Heart right ventricle (tissue), 16 donors: ENCODE measurements at regions of chr15 and their contacts with region 1.

Region 1: DNA sequence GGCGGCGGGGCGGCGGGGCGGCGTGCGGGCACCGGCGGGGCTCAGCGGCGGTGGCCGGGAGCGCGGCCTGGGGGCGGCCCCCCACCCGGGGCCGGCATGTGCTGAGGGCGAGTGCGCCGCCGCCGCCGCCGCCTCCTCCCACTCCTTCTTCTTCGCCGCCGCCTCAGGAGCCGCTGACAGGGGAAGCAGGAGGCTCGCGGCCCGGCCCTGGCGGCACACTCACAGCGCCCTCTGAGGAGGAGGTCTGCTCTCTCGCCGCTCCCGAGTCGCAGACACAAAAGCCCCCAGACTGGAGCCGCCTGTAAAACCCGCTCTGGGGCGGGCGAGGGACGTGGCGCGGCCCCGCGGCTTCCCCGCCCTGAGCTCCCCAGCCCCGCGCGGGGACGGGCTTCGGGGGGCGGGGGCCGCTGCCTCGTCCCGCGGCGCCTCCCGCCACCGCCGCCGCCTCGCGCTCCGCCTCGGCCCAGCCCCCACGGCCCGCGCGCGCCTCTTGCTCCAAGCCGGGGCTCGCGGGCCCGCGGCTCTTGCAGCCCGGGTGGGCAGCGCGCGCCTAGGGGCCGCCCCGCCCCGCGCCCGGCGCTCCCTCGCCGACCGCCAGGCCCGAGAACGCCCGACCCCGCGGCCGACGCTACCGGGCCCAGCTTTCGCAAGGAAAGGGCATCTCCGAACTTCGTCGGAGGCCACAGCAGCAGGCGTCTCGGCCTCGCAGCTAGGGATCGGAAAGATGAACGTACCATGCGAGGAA is at the start of gene PYGO1:
- DNase-seq: peak; percentile 38 to 57
- ATAC-seq: peak; percentile 67 to 92 (median 82)
- H3K4me3 ChIP-seq: peak within 1 kb of the TSS; percentile 43 to 70 (median 65)
- H3K27ac ChIP-seq: peak within 1 kb of the TSS in 8 of 10 donors; percentile 49 to 76 (median 68)
- H3K4me1 ChIP-seq: peaks cover 0 to 11% (median 3%) of the 10 kb centered on the region in 9 donors
- H3K27me3 ChIP-seq: peaks cover 0 to 78% (median 38%) of the 10 kb centered on the region in 7 donors
- CTCF ChIP-seq: no peak
- total RNA-seq, gene PYGO1: 2.7 to 9.5 (median 4.3) TPM

Region 2: DNA sequence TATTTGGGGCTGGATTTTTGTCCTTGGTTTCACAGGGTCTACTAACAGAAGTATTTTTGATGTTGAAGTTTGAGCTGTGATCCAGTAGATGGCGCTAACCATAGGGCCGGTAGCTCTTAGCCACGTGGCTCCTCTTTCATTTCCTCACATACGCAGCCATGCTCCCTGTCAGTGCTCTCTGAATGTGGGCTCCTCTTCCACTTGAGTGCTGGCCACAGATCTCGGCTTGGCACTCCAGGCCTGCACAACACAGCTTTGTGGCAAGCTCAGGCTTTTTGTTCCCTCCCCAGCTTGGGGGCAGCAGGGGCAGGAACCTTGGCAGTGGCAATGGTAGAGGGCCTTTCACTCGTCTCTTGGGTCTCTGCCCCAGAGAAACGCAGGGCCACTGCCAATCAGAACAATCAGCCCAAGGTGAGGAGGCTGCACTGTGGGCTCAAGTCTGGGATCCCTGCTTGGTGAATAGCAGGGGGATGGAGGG is 61.6 kb before region 1 on chr15:
- intact Hi-C with region 1: loop called in 1 of 10 experiments (anchors 5 kb)
- DNase-seq: no peak
- ATAC-seq: peak in 4 of 8 donors; percentile 17 to 66 (median 26)
- H3K4me3 ChIP-seq: no peak overlapping the region
- H3K27ac ChIP-seq: no peak overlapping the region
- H3K4me1 ChIP-seq: no peaks in the 10 kb centered on the region
- H3K27me3 ChIP-seq: peaks cover 0 to 14% (median 3%) of the 10 kb centered on the region in 7 donors
- CTCF ChIP-seq: peak in 8 of 9 donors; percentile 25 to 64 (median 55)